A673 (cell line): ENCODE measurements at regions of chr1 and their contacts with region 1.

Region 1: DNA sequence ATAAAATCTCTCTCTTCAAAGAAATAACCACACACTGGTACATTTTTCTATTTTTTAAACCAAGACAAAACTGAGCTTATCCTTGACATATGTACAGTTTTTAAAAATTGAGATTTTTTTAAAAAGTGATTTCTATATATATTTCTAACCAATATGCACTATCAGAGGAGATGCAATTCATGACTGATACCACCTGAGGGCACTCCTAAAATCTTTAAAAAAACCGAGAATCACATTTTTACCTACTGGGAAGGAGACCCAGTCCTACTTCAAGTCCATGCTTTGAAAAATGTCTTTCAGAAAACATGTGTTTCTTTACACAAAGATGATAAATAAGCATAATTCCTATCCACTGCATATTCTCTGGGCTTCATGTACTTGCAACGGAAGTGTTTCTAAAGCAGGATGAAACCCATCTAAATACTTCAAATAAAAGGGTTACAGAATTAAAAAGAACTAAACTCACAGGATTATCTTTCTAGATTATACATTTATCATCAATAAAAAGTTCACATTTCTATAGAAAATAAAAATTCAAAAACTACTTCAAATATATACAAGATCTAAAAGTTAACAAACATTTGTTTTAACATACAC is 98.6 kb downstream of the ENAH start:
- DNase-seq: peak; percentile 62
- H3K4me3 ChIP-seq: no peak overlapping the region
- H3K27ac ChIP-seq: no peak overlapping the region
- H3K4me1 ChIP-seq: peaks cover 6% of the 10 kb centered on the region
- H3K27me3 ChIP-seq: no peaks in the 10 kb centered on the region
- CTCF ChIP-seq: peak; percentile 73

Region 2: DNA sequence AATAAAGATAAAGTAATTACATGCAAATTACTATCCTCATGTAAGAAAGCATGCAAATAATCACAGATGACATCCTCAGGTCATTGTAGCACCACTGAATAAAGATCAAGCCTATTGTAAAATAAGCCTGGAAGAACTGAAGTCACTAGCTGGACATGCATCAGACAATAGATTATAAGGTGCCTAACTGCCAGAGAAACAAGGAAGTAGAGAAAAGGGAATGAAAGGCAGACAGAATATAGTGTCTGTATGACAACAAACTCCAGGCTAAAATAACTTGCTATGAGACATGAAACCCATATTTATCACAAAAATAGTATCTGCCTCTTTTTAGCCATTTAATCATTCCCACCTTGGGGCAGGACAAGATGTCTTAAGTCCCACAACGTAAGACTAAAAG is 10.1 kb before region 1 on chr1:
- CTCF ChIA-PET with region 1: interaction called, 12 read pairs
- POLR2A ChIA-PET with region 1: no interaction called
- intact Hi-C with region 1: no loop called
- DNase-seq: no peak
- H3K4me3 ChIP-seq: no peak overlapping the region
- H3K27ac ChIP-seq: no peak overlapping the region
- H3K4me1 ChIP-seq: peaks cover 42% of the 10 kb centered on the region
- H3K27me3 ChIP-seq: no peaks in the 10 kb centered on the region
- CTCF ChIP-seq: no peak

Region 3: DNA sequence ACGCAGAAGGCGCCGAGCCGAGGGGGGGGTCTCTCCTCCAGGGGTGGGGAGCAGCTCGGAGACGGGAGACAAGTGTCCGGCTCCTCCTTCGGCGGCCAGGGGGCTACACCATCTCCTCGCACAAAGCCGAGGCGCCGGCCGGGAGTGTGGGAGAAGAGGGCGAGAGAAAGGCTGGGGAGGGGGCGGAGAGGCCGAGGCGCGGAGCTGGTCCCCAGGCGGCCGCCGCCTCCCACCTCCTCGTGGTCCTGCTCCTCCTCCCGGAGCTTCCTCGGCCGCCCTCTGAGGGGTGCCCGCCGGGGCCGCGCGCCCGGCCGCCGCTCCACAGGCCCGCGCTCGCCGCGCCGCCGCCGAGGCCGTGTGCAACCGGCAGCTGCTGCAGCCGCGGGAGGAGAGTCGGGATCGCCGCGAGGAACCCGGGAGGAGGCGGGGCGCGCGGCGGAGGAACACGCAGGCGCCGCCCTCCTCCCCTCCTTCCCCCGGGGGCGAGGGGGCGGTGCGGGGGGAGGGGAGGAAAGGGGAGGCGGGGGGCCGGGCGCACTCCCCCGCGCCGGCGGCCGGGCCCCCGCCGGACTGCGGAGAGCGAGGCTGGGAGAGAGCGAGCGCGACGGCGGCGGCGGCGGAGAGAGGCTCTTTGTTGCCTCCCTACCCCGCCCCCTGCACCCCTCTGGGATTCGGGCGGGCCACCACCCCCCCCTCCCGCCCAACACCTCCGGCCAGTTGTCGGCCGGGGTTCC is 98.6 kb after region 1 on chr1 and contains the start of gene ENAH:
- CTCF ChIA-PET with region 1: no interaction called
- POLR2A ChIA-PET with region 1: interaction called, 7 read pairs
- intact Hi-C with region 1: loop called (anchors 10 kb)
- DNase-seq: peak; percentile 92
- H3K4me3 ChIP-seq: peak within 1 kb of the TSS; percentile 85
- H3K27ac ChIP-seq: peak within 1 kb of the TSS; percentile 96
- H3K4me1 ChIP-seq: peaks cover 41% of the 10 kb centered on the region
- H3K27me3 ChIP-seq: no peaks in the 10 kb centered on the region
- CTCF ChIP-seq: no peak
- total RNA-seq, gene ENAH: 171 and 186 TPM in 2 replicates

Region 4: GRCh38 chr1:225772323-225772768 is 218.0 kb after region 1 on chr1:
- CTCF ChIA-PET with region 1: interaction called, 3 read pairs
- POLR2A ChIA-PET with region 1: no interaction called
- intact Hi-C with region 1: loop called (anchors 2 kb)
- DNase-seq: peak; percentile 92
- H3K4me3 ChIP-seq: no peak overlapping the region
- H3K27ac ChIP-seq: no peak overlapping the region
- H3K4me1 ChIP-seq: peaks cover 28% of the 10 kb centered on the region
- H3K27me3 ChIP-seq: no peaks in the 10 kb centered on the region
- CTCF ChIP-seq: peak; percentile 90